ENCODE measurements at regions of chr3 and their contacts with region 1.

Region 1: GRCh38 chr3:104437131-104437750 is 929.5 kb upstream of the ALCAM start:
- DNase-seq: peak; percentile 72
- ATAC-seq: peak; percentile 76
- H3K4me3 ChIP-seq: peak overlapping the region; percentile 65
- H3K27ac ChIP-seq: peak overlapping the region; percentile 47
- H3K4me1 ChIP-seq: peaks cover 40% of the 10 kb centered on the region
- H3K27me3 ChIP-seq: no peaks in the 10 kb centered on the region
- CTCF ChIP-seq: no peak

Region 2: DNA sequence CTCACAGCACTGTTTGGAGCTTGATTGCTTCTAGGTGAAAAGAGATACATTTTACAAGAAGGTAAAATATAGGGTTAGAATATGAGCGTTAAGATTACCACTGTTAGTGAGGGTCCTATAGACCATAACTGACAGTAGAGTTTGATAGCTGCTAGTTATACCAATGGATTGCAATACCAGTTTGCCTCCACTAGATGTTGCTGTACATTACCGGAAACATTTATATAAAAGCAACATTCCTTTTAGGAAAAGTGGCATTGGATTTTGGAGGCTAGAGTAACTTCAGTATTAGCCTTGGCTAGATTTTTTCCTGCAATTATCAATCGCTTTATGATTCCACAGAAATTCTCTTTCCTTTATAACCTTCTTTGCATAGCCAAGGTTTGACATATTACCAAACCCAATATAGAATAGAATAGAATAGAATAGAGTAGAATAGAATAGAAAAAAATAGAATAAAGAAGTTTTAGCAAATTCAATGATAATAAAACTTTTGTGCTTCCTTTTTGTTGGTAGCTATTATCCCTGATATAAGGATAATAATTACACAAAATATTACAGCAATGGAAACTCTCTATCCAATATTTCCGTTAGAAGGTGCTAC is 164.1 kb before region 1 on chr3:
- CTCF ChIA-PET with region 1: no interaction called
- POLR2A ChIA-PET with region 1: no interaction called
- intact Hi-C with region 1: loop called (anchors 10 kb)
- DNase-seq: peak; percentile 69
- ATAC-seq: peak; percentile 38; the same call in 1 of the 2 replicates
- H3K4me3 ChIP-seq: no peak overlapping the region
- H3K27ac ChIP-seq: no peak overlapping the region
- H3K4me1 ChIP-seq: no peaks in the 10 kb centered on the region
- H3K27me3 ChIP-seq: no peaks in the 10 kb centered on the region
- CTCF ChIP-seq: peak; percentile 89

Region 3: DNA sequence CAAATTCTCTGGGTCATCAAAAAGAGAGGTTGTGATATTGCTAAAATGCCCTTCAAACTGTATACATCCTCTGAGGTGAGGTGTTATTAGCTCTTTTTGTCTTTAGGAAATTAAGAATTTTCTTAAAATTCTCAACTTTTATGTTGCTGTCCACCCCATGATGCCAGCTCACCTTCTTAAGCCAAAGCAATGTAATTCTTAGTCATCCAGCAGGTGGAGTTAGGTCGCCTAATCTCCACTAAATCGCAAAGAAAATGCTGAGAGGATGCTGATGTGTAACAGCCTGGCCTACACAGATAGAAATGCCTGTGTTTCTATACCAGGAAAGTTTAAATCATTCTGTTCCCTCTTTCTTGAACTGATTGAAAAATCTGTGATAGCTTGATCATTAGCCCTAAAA is 159.3 kb after region 1 on chr3:
- CTCF ChIA-PET with region 1: no interaction called
- POLR2A ChIA-PET with region 1: no interaction called
- intact Hi-C with region 1: loop called (anchors 5 kb)
- DNase-seq: peak; percentile 84
- ATAC-seq: peak; percentile 82
- H3K4me3 ChIP-seq: no peak overlapping the region
- H3K27ac ChIP-seq: peak overlapping the region; percentile 38
- H3K4me1 ChIP-seq: peaks cover 28% of the 10 kb centered on the region
- H3K27me3 ChIP-seq: no peaks in the 10 kb centered on the region
- CTCF ChIP-seq: peak; percentile 86

Region 4: DNA sequence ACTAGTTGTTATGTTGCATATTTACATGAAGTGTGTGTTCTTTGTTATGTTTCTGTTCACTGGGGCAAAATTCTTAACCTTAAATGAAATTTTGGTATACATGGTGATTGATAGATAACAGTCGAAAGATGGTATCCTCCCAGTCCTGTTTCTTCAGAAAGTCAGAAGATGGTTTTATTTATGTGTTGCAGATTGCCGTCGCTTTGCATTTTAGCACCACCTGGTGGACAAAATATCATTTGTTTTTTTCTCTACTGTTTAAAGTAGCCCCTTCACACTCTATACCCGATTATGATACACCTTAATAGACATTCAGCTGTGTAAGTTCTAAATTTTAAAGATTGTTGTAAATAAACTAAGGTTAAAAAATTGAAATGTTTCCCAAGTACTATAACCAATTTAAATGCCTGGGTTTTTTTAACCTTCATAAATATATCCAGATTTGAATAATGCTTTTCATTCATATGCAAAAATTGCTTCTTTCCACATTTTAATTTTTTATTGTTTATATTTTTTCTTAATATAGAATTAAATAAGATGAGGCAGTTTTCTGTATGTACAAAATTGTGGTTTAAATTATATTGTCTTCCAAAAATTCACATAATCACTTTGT is 1081.7 kb after region 1 on chr3:
- CTCF ChIA-PET with region 1: no interaction called
- POLR2A ChIA-PET with region 1: no interaction called
- intact Hi-C with region 1: loop called (anchors 10 kb)
- DNase-seq: peak; percentile 90
- ATAC-seq: peak; percentile 53
- H3K4me3 ChIP-seq: no peak overlapping the region
- H3K27ac ChIP-seq: no peak overlapping the region
- H3K4me1 ChIP-seq: peaks cover 45% of the 10 kb centered on the region
- H3K27me3 ChIP-seq: no peaks in the 10 kb centered on the region
- CTCF ChIP-seq: peak; percentile 86

Measured in PC-3 (cell line).